ENCODE measurements at regions of chr2 and their contacts with region 1.

Region 1: GRCh38 chr2:119028327-119029174 is 86.6 kb downstream of the MARCO start:
- DNase-seq: peak; percentile 50
- H3K4me3 ChIP-seq: no peak overlapping the region
- H3K27ac ChIP-seq: no peak overlapping the region
- H3K4me1 ChIP-seq: no peaks in the 10 kb centered on the region
- H3K27me3 ChIP-seq: peaks cover 41% of the 10 kb centered on the region

Region 2: GRCh38 chr2:119290859-119291587 is 262.5 kb after region 1 on chr2:
- in situ Hi-C with region 1: loop called (anchors 10 kb)
- DNase-seq: peak; percentile 78
- H3K4me3 ChIP-seq: no peak overlapping the region
- H3K27ac ChIP-seq: no peak overlapping the region
- H3K4me1 ChIP-seq: no peaks in the 10 kb centered on the region
- H3K27me3 ChIP-seq: no peaks in the 10 kb centered on the region

Measured in GM23248 (cell line).